OCI-LY7 (cell line): ENCODE measurements at regions of chr12 and their contacts with region 1.

Region 1: GRCh38 chr12:16407346-16407745 is 59.9 kb downstream of the MGST1 start:
- DNase-seq: no peak
- H3K4me3 ChIP-seq: no peak overlapping the region
- H3K27ac ChIP-seq: no peak overlapping the region
- H3K4me1 ChIP-seq: no peaks in the 10 kb centered on the region
- CTCF ChIP-seq: no peak

Region 2: GRCh38 chr12:16344269-16344668 is 63.1 kb before region 1 on chr12:
- CTCF ChIA-PET with region 1: no interaction called
- POLR2A ChIA-PET with region 1: no interaction called
- intact Hi-C with region 1: no loop called
- DNase-seq: no peak
- H3K4me3 ChIP-seq: no peak overlapping the region
- H3K27ac ChIP-seq: no peak overlapping the region
- H3K4me1 ChIP-seq: peaks cover 12% of the 10 kb centered on the region
- CTCF ChIP-seq: no peak

Region 3: GRCh38 chr12:16369156-16369555 is 38.2 kb before region 1 on chr12:
- CTCF ChIA-PET with region 1: no interaction called
- POLR2A ChIA-PET with region 1: no interaction called
- intact Hi-C with region 1: no loop called
- DNase-seq: no peak
- H3K4me3 ChIP-seq: no peak overlapping the region
- H3K27ac ChIP-seq: no peak overlapping the region
- H3K4me1 ChIP-seq: no peaks in the 10 kb centered on the region
- CTCF ChIP-seq: no peak

Region 4: GRCh38 chr12:16437281-16437861 is 30.0 kb after region 1 on chr12:
- CTCF ChIA-PET with region 1: no interaction called
- POLR2A ChIA-PET with region 1: no interaction called
- intact Hi-C with region 1: no loop called
- DNase-seq: no peak
- H3K4me3 ChIP-seq: no peak overlapping the region
- H3K27ac ChIP-seq: no peak overlapping the region
- H3K4me1 ChIP-seq: no peaks in the 10 kb centered on the region
- CTCF ChIP-seq: no peak

Region 5: DNA sequence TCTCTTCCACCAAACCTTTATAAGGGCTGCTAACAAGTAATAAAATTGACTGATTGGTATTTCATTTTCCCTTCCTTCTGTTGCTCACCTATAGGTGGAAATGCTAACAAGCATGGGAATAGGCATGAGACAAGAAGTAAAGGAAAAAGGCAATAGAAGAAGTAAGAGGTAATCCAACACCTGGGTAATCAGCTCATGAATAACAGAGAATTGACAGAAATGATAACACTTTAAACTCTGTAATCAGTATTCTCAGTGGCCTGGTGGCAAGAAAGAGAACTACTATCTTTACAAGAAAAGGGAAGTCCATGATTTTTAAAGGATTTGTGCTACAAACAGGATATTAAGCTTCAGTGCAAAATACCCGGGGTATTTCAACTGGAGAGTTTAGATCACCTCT is 944.8 kb after region 1 on chr12:
- CTCF ChIA-PET with region 1: no interaction called
- POLR2A ChIA-PET with region 1: no interaction called
- intact Hi-C with region 1: loop called (anchors 10 kb)
- DNase-seq: peak; percentile 1
- H3K4me3 ChIP-seq: no peak overlapping the region
- H3K27ac ChIP-seq: no peak overlapping the region
- H3K4me1 ChIP-seq: no peaks in the 10 kb centered on the region
- CTCF ChIP-seq: 0 out of 2 replicates have a peak, but pooled peaks have one; percentile 22